ENCODE measurements at regions of chr1 and their contacts with region 1.

Region 1: GRCh38 chr1:19715334-19716203 is 50.9 kb downstream of the HTR6 start:
- DNase-seq: peak; percentile 55 to 83 (median 69)
- ATAC-seq: peak; percentile 99
- H3K4me3 ChIP-seq: no peak overlapping the region
- H3K4me3 Mint-ChIP-seq: no peak overlapping the region
- H3K27ac ChIP-seq: no peak overlapping the region
- H3K27ac Mint-ChIP-seq: no peak overlapping the region
- H3K4me1 ChIP-seq: peaks cover 0 to 9% of the 10 kb centered on the region in 2 donors
- H3K4me1 Mint-ChIP-seq: peaks cover 7 to 24% (median 13%) of the 10 kb centered on the region in 7 donors
- H3K27me3 ChIP-seq: no peaks in the 10 kb centered on the region
- H3K27me3 Mint-ChIP-seq: no peaks in the 10 kb centered on the region

Region 2: DNA sequence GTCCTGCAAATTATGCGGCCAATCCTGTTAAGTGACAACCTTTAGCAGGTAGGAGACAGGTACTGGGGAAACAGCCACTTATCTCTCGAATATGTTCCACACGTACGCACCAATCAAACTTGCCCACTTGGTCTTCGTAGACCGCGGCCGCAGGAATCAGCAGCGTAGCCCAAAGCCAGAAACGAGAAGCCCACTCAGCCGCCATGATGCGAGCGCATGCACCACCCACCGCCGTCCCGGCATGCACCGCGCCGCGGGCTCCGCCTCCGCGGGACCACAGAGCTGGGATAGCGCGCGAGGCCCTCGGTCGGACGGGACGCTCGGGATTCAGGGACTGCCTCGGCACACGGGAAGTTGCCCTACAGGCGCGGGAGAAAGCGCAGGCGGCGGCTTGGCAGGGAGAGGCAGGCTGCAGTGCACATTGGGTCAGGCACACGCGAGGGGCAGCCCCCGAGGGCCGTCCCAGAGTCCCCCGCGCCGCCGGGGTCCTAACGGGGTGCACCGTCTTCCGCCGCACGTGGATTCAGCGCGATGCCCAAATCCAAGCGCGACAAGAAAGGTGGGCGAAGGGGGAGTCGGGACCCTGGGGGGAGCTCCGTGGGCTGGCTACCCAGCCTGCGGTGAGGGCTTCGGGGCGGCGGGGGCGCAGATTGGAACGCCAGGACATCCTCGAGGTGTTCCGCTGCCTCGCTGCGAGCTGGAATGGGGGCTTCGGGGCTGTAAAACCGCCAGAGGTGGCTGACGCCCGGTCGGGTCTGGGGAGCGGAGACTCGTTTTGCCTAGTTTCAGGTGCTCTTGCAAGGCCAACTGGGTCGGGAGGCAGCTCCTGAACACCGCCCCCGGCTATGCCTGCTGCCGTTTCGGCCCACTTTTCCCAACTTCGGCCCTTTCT is 464.0 kb before region 1 on chr1 and contains the starts of genes EMC1 and MRTO4:
- CTCF ChIA-PET with region 1: no interaction called
- POLR2A ChIA-PET with region 1: no interaction called
- intact Hi-C with region 1: no loop called
- DNase-seq: peak; percentile 83 to 96 (median 92)
- ATAC-seq: peak; percentile 97
- H3K4me3 ChIP-seq: peak within 1 kb of the TSS; percentile 92
- H3K4me3 Mint-ChIP-seq: peak within 1 kb of the TSS; percentile 91 to 98 (median 96)
- H3K27ac ChIP-seq: peak within 1 kb of the TSS; percentile 91
- H3K27ac Mint-ChIP-seq: peak within 1 kb of the TSS; percentile 91 to 97 (median 95)
- H3K4me1 ChIP-seq: peaks cover 26 to 30% of the 10 kb centered on the region in 2 donors
- H3K4me1 Mint-ChIP-seq: peaks cover 20 to 46% (median 29%) of the 10 kb centered on the region in 7 donors
- H3K27me3 ChIP-seq: no peaks in the 10 kb centered on the region
- H3K27me3 Mint-ChIP-seq: no peaks in the 10 kb centered on the region
- total RNA-seq, gene EMC1: 29.8 to 43.7 (median 37.1) TPM
- total RNA-seq, gene MRTO4: 17.1 to 42.3 (median 22.4) TPM

Region 3: DNA sequence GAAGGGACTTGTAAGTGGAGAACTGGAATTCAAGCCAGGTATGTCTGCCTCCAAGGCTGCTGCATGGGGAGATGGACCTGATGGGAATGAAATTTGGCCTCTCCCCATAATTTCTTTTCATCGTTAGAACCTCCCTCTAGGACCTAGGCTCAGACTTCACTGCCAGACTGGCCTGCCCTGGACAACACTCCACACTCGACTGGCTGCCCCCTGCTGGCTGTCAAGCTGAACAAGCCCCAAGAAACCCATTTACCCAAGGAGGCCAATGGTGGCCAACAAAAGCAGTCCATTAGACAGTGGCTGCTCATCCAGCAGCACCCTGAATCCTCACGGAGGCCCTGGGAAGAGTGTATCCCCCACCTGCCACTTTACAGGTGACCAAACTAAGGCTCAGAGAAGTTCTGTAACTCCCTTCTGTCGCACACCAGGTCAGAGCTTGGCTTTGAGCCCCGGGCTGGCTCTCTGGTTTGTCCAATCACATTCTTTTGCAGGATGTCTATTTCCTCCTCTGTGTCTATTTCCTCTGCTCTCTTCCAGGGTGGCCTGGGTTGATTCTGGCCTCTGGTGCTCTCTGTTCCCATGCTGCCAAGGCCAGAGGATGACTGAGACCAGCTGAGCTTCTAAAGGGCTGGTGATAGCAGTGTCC is 95.8 kb after region 1 on chr1:
- CTCF ChIA-PET with region 1: no interaction called
- POLR2A ChIA-PET with region 1: no interaction called
- intact Hi-C with region 1: loop called (anchors 1 kb)
- DNase-seq: peak in 7 of 9 donors; percentile 10 to 53 (median 31)
- ATAC-seq: peak; percentile 68
- H3K4me3 ChIP-seq: no peak overlapping the region
- H3K4me3 Mint-ChIP-seq: no peak overlapping the region
- H3K27ac ChIP-seq: no peak overlapping the region
- H3K27ac Mint-ChIP-seq: peak overlapping the region in 1 of 9 donors; percentile 62
- H3K4me1 ChIP-seq: no peaks in the 10 kb centered on the region
- H3K4me1 Mint-ChIP-seq: no peaks in the 10 kb centered on the region
- H3K27me3 ChIP-seq: no peaks in the 10 kb centered on the region
- H3K27me3 Mint-ChIP-seq: peaks cover 0 to 6% (median 0%) of the 10 kb centered on the region in 5 donors

Region 4: GRCh38 chr1:20265250-20265649 is 549.7 kb after region 1 on chr1:
- CTCF ChIA-PET with region 1: no interaction called
- POLR2A ChIA-PET with region 1: no interaction called
- intact Hi-C with region 1: no loop called
- DNase-seq: no peak
- ATAC-seq: no peak
- H3K4me3 ChIP-seq: no peak overlapping the region
- H3K4me3 Mint-ChIP-seq: no peak overlapping the region
- H3K27ac ChIP-seq: no peak overlapping the region
- H3K27ac Mint-ChIP-seq: no peak overlapping the region
- H3K4me1 ChIP-seq: no peaks in the 10 kb centered on the region
- H3K4me1 Mint-ChIP-seq: no peaks in the 10 kb centered on the region
- H3K27me3 ChIP-seq: no peaks in the 10 kb centered on the region
- H3K27me3 Mint-ChIP-seq: peaks cover 4 to 33% (median 12%) of the 10 kb centered on the region in 5 donors